Motor neuron (in vitro differentiated cells): ENCODE measurements at regions of chr6 and their contacts with region 1.

Region 1: DNA sequence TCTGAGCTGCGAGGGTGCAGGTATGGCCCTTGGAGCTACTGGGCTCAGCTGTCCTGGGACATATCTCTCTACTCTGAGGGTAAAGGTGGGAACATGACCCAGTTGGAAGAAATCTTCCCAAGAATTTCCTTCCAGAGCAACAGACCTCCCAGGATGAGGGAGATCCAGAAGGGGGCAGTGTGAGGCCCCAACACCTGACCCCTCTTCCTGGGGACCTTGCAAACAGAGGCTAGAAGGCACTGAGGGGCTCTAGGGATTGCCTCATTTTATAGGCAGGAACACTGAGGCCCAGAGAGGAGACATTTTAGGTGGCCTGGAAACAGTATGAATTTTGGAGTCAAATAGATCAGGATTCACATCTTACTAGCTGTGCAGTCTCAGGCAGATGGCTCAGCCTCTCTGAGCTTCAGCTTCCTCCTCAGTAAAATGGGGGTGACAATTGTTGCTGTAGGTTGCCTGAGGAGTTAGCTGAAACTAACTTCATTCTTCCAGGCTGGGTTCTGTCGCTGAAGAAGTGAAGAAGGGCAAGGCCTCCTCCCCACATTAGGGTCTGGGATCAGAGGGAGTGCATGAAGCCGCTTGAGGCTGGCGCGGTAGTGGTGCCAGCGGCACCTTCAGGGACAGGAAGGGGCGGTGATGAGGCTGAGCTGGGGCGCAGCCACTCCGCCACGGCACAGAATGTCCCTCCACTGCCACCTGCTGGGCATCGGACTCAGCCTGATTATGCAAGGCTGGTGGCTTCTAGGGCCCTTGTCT is 11.4 kb downstream of the KCNK17 start:
- ATAC-seq: peak; percentile 91 to 99 (median 94)
- H3K4me3 ChIP-seq: no peak overlapping the region
- H3K27ac ChIP-seq: no peak overlapping the region
- H3K4me1 ChIP-seq: peaks cover 0 to 2% of the 10 kb centered on the region in 2 donors

Region 2: GRCh38 chr6:38871741-38872568 is 430.9 kb before region 1 on chr6:
- in situ Hi-C with region 1: loop called in 6 of 9 experiments (anchors 25 kb)
- ATAC-seq: peak in 4 of 8 experiments; percentile 36 to 72 (median 64)
- H3K4me3 ChIP-seq: no peak overlapping the region
- H3K27ac ChIP-seq: no peak overlapping the region
- H3K4me1 ChIP-seq: no peaks in the 10 kb centered on the region

Region 3: GRCh38 chr6:38924791-38925509 is 377.9 kb before region 1 on chr6:
- in situ Hi-C with region 1: no loop called
- ATAC-seq: peak in 1 of 8 experiments; percentile 49
- H3K4me3 ChIP-seq: no peak overlapping the region
- H3K27ac ChIP-seq: no peak overlapping the region
- H3K4me1 ChIP-seq: peaks cover 0 to 2% of the 10 kb centered on the region in 2 donors

Region 4: GRCh38 chr6:38973178-38974054 is 329.4 kb before region 1 on chr6:
- in situ Hi-C with region 1: loop called in 6 of 9 experiments (anchors 10 to 25 kb)
- ATAC-seq: peak in 7 of 8 experiments; percentile 36 to 88 (median 68)
- H3K4me3 ChIP-seq: no peak overlapping the region
- H3K27ac ChIP-seq: no peak overlapping the region
- H3K4me1 ChIP-seq: no peaks in the 10 kb centered on the region

Region 5: GRCh38 chr6:38997128-38997761 is 305.6 kb before region 1 on chr6:
- in situ Hi-C with region 1: loop called in 6 of 9 experiments (anchors 25 kb)
- ATAC-seq: peak in 2 of 8 experiments; percentile 44
- H3K4me3 ChIP-seq: no peak overlapping the region
- H3K27ac ChIP-seq: no peak overlapping the region
- H3K4me1 ChIP-seq: no peaks in the 10 kb centered on the region

Region 6: GRCh38 chr6:39003072-39003471 is 299.8 kb before region 1 on chr6:
- in situ Hi-C with region 1: loop called in 6 of 9 experiments (anchors 25 kb)
- ATAC-seq: no peak
- H3K4me3 ChIP-seq: no peak overlapping the region
- H3K27ac ChIP-seq: no peak overlapping the region
- H3K4me1 ChIP-seq: no peaks in the 10 kb centered on the region

Region 7: DNA sequence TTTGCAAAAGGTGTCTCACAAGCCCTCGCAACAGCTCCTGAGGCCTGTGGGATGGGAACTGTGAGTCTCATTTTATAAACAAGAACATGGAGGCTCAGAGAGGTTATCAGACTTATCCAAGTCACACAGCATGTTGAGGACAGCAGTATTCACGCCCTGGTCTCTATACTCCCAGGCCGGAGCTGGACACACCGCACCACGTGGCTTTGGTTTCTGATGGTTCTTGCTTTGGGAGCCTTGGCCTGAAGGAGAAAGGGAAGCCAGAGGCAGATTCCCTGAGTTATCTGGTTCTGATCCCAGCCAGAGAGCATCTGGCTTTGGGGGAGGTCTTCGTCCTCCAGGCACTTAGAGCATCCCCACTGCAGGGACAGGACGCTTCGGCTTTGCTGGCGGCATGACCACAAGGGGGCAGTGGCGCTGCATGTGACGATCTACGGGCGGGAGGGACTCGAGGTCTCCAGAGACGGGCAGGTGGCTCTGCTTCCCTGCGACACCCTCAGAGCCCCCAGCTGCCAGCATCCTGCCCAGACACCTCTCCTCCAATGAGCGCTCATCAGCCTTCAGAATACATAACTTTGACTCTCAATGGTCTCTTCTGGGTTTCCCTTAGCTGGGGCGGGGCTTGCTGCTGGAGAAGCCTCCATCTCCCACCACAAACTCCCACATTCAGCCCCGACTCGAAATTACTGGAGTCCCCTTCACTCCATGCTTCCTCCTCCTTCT is 136.5 kb before region 1 on chr6:
- in situ Hi-C with region 1: loop called (anchors 5 to 25 kb)
- ATAC-seq: peak; percentile 88 to 99 (median 94)
- H3K4me3 ChIP-seq: no peak overlapping the region
- H3K27ac ChIP-seq: no peak overlapping the region
- H3K4me1 ChIP-seq: no peaks in the 10 kb centered on the region